ENCODE measurements at regions of chr5 and their contacts with region 1.

Region 1: DNA sequence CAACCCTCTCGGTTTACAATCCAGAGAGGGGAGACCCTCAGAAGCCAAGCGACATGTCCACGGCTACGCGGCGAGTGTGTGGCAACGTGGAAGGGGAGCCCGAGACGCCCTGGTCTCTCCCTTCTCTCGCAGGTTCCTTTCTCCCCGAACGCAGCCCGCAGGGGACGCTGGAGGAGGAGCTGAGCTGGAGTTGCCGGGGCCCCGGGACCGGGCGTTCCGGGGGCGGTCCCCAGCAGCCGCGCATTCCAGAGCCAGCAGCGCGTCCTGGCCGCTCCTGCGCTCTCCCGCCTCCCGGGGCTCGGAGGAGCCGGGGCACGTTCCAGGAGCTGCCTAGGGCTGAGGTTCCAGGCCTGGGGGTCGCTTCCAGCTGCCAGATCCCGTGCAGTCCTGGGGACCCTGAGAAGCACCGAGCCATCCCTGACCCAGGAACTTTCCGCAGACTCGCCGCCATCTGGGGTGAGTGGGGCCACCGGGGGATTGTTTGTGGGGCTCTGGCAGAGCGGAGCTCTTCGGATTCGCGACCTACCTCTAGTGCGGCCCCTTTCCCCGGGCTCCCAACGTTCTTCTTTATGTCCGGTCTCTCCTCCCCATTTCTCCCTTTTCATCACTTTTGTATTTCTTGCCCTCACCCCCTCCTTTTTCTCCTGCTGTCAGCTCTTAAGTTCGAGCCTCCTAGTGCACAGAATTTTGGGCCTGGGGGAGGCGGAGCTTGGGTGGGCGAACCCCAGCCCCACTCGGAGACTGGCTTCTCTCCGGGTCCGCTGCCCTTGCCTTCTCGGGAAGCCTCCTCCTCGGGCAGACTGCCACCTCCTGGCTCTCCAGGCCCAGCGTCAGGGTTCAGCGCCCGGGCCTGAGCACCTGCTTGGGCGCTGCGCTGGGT is at the start of gene SMIM3:
- DNase-seq: peak; percentile 35 to 74 (median 56)
- ATAC-seq: peak; percentile 72 to 75 (median 72)
- H3K4me3 ChIP-seq: peak within 1 kb of the TSS; percentile 81 to 94
- H3K4me3 Mint-ChIP-seq: peak within 1 kb of the TSS; percentile 98 to 99 (median 99)
- H3K27ac ChIP-seq: peak within 1 kb of the TSS; percentile 47
- H3K27ac Mint-ChIP-seq: peak within 1 kb of the TSS; percentile 92 to 94
- H3K4me1 ChIP-seq: peaks cover 18 to 43% of the 10 kb centered on the region in 2 experiments
- H3K4me1 Mint-ChIP-seq: peaks cover 51 to 59% (median 58%) of the 10 kb centered on the region in 3 donors
- H3K27me3 ChIP-seq: no peaks in the 10 kb centered on the region
- H3K27me3 Mint-ChIP-seq: peaks cover 1% of the 10 kb centered on the region in 2 donors
- total RNA-seq, gene SMIM3: 2.8 to 9.1 (median 5.7) TPM

Region 2: DNA sequence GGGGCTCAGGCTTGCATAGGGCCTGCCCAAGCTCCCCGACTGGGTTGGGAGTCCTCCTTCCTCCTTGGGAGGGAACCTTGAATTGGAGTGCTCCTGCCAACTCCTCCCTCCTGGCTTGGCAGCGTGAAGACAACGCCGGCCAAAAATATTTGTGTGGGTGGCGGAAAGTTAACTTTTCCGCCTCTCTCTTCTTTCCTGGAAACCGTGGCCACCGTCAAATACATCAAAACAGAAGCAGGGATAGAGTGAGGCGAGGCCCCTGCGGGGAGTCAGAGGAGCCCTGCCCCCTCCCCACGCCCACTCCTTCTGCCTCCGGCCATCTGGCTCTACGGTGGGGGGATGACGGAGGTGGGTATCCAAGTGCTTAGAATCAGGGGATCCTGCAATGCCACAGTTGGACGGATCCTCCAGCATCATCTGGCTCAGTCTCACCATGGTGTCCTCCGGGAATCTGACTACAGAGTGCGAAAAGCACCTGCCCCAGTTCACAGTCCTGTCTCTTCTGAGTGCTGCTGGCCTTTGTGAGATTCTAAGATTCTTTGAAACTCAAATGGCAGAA is 163.5 kb before region 1 on chr5:
- CTCF ChIA-PET with region 1: no interaction called
- POLR2A ChIA-PET with region 1: no interaction called
- DNase-seq: no peak
- ATAC-seq: no peak
- H3K4me3 ChIP-seq: no peak overlapping the region
- H3K4me3 Mint-ChIP-seq: no peak overlapping the region
- H3K27ac ChIP-seq: no peak overlapping the region
- H3K27ac Mint-ChIP-seq: no peak overlapping the region
- H3K4me1 ChIP-seq: peaks cover 0 to 3% of the 10 kb centered on the region in 2 experiments
- H3K4me1 Mint-ChIP-seq: peaks cover 0 to 4% (median 0%) of the 10 kb centered on the region in 3 donors
- H3K27me3 ChIP-seq: peaks cover 0 to 25% of the 10 kb centered on the region in 2 experiments
- H3K27me3 Mint-ChIP-seq: peaks cover 6 to 10% of the 10 kb centered on the region in 2 donors

Region 3: GRCh38 chr5:150731669-150732242 is 47.0 kb before region 1 on chr5:
- CTCF ChIA-PET with region 1: no interaction called
- POLR2A ChIA-PET with region 1: no interaction called
- DNase-seq: no peak
- ATAC-seq: no peak
- H3K4me3 ChIP-seq: no peak overlapping the region
- H3K4me3 Mint-ChIP-seq: no peak overlapping the region
- H3K27ac ChIP-seq: no peak overlapping the region
- H3K27ac Mint-ChIP-seq: no peak overlapping the region
- H3K4me1 ChIP-seq: peaks cover 0 to 7% of the 10 kb centered on the region in 2 experiments
- H3K4me1 Mint-ChIP-seq: peaks cover 11 to 22% (median 21%) of the 10 kb centered on the region in 3 donors
- H3K27me3 ChIP-seq: no peaks in the 10 kb centered on the region
- H3K27me3 Mint-ChIP-seq: no peaks in the 10 kb centered on the region

Region 4: GRCh38 chr5:150758531-150759333 is 20.0 kb before region 1 on chr5 and contains the start of gene DCTN4:
- CTCF ChIA-PET with region 1: interaction called, 6 to 27 read pairs
- POLR2A ChIA-PET with region 1: interaction called, 5 to 7 read pairs
- DNase-seq: peak; percentile 88 to 98 (median 92)
- ATAC-seq: peak; percentile 92 to 95 (median 94)
- H3K4me3 ChIP-seq: peak within 1 kb of the TSS; percentile 79 to 89
- H3K4me3 Mint-ChIP-seq: no peak within 1 kb of the TSS
- H3K27ac ChIP-seq: peak within 1 kb of the TSS; percentile 90
- H3K27ac Mint-ChIP-seq: no peak within 1 kb of the TSS
- H3K4me1 ChIP-seq: peaks cover 11 to 20% of the 10 kb centered on the region in 2 experiments
- H3K4me1 Mint-ChIP-seq: peaks cover 29 to 40% (median 37%) of the 10 kb centered on the region in 3 donors
- H3K27me3 ChIP-seq: no peaks in the 10 kb centered on the region
- H3K27me3 Mint-ChIP-seq: no peaks in the 10 kb centered on the region
- total RNA-seq, gene DCTN4: 36.9 to 79.8 (median 38.4) TPM

Region 5: GRCh38 chr5:152061095-152061494 is 1282.3 kb after region 1 on chr5:
- CTCF ChIA-PET with region 1: interaction called in 1 of 2 experiments, 12 read pairs
- POLR2A ChIA-PET with region 1: no interaction called
- DNase-seq: no peak
- ATAC-seq: no peak
- H3K4me3 ChIP-seq: no peak overlapping the region
- H3K4me3 Mint-ChIP-seq: no peak overlapping the region
- H3K27ac ChIP-seq: no peak overlapping the region
- H3K27ac Mint-ChIP-seq: no peak overlapping the region
- H3K4me1 ChIP-seq: no peaks in the 10 kb centered on the region
- H3K4me1 Mint-ChIP-seq: peaks cover 0 to 4% (median 2%) of the 10 kb centered on the region in 3 donors
- H3K27me3 ChIP-seq: no peaks in the 10 kb centered on the region
- H3K27me3 Mint-ChIP-seq: no peaks in the 10 kb centered on the region

Measured in T-cell (primary cell).